ENCODE measurements at regions of chr16 and their contacts with region 1.

Region 1: GRCh38 chr16:75764154-75764768 is 38.0 kb upstream of the CPHXL start:
- DNase-seq: peak; percentile 70
- CTCF ChIP-seq: peak; percentile 84

Region 2: GRCh38 chr16:75385507-75386152 is 378.6 kb before region 1 on chr16:
- CTCF ChIA-PET with region 1: no interaction called
- POLR2A ChIA-PET with region 1: no interaction called
- DNase-seq: peak; percentile 50
- CTCF ChIP-seq: peak; percentile 43

Region 3: DNA sequence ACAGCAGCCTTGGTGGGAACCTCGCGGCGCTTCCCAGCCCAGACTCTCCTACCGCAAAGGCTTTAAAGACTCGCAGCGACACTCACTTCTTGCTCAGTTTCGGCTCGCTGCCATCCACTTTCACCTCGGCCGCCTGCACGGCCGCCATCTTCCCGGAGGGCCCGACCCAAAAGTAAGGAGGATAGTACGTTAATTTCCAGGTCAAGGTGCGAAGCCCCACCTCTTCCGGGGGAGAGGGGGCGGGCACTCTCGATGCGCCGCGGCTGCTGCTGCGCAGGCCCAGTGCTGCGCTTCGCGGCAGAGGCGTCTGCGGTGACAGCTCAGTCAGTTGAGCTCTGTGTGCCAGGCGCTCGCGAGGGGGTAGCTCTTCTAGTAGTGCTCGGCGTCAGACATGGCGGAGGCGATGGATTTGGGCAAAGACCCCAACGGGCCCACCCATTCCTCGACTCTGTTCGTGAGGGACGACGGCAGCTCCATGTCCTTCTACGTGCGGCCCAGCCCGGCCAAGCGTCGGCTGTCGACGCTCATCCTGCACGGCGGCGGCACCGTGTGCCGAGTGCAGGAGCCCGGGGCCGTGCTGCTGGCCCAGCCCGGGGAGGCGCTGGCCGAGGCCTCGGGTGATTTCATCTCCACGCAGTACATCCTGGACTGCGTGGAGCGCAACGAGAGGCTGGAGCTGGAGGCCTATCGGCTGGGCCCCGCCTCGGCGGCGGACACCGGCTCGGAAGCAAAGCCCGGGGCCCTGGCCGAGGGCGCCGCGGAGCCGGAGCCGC is 116.6 kb before region 1 on chr16 and contains the starts of genes KARS1 and TERF2IP:
- CTCF ChIA-PET with region 1: interaction called, 12 read pairs
- POLR2A ChIA-PET with region 1: no interaction called
- DNase-seq: peak; percentile 96
- CTCF ChIP-seq: no peak

Measured in GM10248 (cell line).